ENCODE measurements at regions of chr6 and their contacts with region 1.

Region 1: DNA sequence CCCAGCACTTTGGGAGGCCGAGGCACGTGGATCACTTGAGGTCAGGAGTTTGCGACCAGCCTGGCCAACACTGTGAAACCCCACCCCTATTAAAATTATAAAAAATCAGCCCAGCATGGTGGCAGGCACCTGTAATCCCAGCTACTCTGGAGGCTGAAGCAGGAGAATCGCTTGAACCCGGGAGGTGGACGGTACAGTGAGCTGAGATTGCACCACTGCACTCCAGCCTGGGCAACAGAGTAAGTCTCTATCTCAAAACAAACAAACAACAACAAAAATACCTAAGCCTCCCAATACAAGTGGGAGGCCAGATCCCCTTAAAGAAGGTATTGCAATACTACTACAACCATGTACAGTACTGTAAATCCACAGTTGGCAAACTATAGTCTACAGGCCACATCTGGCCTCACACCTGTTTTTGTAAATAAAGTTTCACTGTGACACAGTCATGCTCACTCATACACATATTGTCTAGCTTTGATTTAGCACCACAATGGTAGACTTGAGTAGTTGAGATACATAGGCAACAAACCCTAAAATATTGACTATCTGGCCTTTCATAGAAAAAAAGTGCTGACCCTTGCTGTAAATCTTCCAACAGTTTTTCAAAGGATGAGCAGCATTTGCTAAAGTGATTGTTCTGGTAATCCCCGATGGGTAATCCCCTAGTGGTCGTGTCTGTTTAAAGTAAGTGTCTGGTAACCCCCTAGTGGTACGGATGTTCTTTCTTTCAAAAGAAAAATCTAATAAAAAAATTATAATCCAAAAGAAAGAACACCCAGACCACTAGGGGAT is 202.0 kb downstream of the RNGTT start:
- DNase-seq: no peak
- H3K4me3 ChIP-seq: no peak overlapping the region
- H3K27ac ChIP-seq: no peak overlapping the region
- H3K4me1 ChIP-seq: no peaks in the 10 kb centered on the region; a peak in 1 of 7 replicates
- H3K27me3 ChIP-seq: no peaks in the 10 kb centered on the region
- CTCF ChIP-seq: peak in 2 of 3 experiments; percentile 35 to 77; a peak in 3 of 4 replicates
- EP300 ChIP-seq: no peak
- POLR2A ChIP-seq: no peak
- RAD21 ChIP-seq: peak in 1 of 2 experiments; percentile 17; a peak in 1 of 4 replicates

Region 2: GRCh38 chr6:88780714-88781389 is 19.4 kb after region 1 on chr6:
- CTCF ChIA-PET with region 1: interaction called, 13 read pairs
- POLR2A ChIA-PET with region 1: no interaction called
- DNase-seq: peak; percentile 51 to 60
- H3K4me3 ChIP-seq: no peak overlapping the region
- H3K27ac ChIP-seq: no peak overlapping the region
- H3K4me1 ChIP-seq: no peaks in the 10 kb centered on the region
- H3K27me3 ChIP-seq: no peaks in the 10 kb centered on the region
- CTCF ChIP-seq: peak in 2 of 3 experiments; percentile 71 to 86; a peak in 3 of 4 replicates
- EP300 ChIP-seq: no peak
- POLR2A ChIP-seq: no peak
- RAD21 ChIP-seq: peak; percentile 83 to 91

Measured in H1 (cell line).